Panc1 (cell line): ENCODE measurements at regions of chr14 and their contacts with region 1.

Region 1: GRCh38 chr14:54566410-54567223 is at the start of gene SAMD4A:
- DNase-seq: no peak
- ATAC-seq: peak; percentile 67
- H3K4me3 ChIP-seq: peak within 1 kb of the TSS; percentile 64 to 79
- H3K27ac ChIP-seq: peak within 1 kb of the TSS; percentile 84
- H3K4me1 ChIP-seq: peaks cover 22% of the 10 kb centered on the region
- H3K27me3 ChIP-seq: no peaks in the 10 kb centered on the region
- CTCF ChIP-seq: peak; percentile 52
- total RNA-seq, gene SAMD4A: 15.2 TPM

Region 2: DNA sequence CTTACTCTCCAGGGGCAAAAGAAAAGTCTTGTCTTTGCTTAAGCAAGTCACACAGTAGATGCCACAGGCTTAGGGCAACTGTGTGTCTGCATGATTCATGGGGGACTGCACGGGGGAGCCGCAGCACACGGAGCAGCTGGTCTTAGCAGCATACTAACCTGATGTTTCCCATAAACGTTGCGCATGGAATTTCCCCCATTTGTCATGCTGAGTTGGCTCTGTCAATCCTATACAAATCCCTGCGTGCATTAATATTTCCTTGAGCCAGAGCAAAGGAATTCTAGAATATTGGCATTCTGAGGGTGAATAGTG is 71.5 kb after region 1 on chr14:
- CTCF ChIA-PET with region 1: interaction called, 3 read pairs
- POLR2A ChIA-PET with region 1: interaction called, 6 read pairs
- in situ Hi-C with region 1: no loop called
- intact Hi-C with region 1: loop called (anchors 5 kb)
- DNase-seq: no peak
- ATAC-seq: peak; percentile 87
- H3K4me3 ChIP-seq: no peak overlapping the region
- H3K27ac ChIP-seq: 0 out of 2 replicates have a peak overlapping the region, but pooled peaks have one; percentile 17
- H3K4me1 ChIP-seq: peaks cover 12% of the 10 kb centered on the region
- H3K27me3 ChIP-seq: no peaks in the 10 kb centered on the region
- CTCF ChIP-seq: no peak

Region 3: DNA sequence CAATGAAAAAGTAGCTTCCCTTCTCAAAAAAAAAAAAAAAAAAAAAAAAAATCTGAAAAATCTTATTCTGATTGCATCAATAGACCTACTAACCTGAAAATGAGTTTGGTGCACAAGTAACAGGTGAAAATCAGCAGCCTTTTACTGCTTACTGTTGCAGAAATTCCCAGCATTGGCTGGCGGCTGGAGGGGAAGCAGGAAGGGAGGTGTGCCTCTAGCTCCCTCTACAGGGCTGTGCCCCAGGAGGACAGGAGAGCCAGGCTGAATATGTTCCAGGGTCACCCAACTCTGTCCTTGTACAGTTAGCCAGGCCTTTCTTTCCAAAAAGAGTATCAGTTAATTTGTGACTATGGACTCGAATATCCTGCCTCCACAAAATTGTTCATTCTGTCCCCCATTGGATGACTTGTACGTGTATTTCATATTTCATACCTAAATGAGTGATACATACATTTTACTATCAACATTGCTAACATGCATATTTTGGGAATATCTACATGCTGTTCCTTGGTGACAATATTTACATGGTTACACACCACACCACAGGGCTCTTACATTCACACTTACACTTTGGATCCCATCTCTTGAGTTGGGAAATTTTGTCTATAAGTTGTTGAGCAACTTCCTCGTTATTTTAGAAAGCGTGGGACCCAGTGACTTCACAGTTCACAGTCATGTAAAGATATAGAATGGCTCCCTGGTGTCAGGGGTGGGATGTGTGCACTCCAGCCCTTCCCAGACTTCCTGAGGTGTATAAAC is 125.1 kb after region 1 on chr14:
- CTCF ChIA-PET with region 1: no interaction called
- POLR2A ChIA-PET with region 1: interaction called, 8 read pairs
- in situ Hi-C with region 1: no loop called
- intact Hi-C with region 1: loop called (anchors 2 kb)
- DNase-seq: peak; percentile 59
- ATAC-seq: peak; percentile 93
- H3K4me3 ChIP-seq: no peak overlapping the region
- H3K27ac ChIP-seq: no peak overlapping the region
- H3K4me1 ChIP-seq: no peaks in the 10 kb centered on the region
- H3K27me3 ChIP-seq: no peaks in the 10 kb centered on the region
- CTCF ChIP-seq: peak; percentile 87

Region 4: GRCh38 chr14:54805521-54806322 is 239.1 kb after region 1 on chr14:
- CTCF ChIA-PET with region 1: interaction called, 8 read pairs
- POLR2A ChIA-PET with region 1: no interaction called
- in situ Hi-C with region 1: no loop called
- intact Hi-C with region 1: loop called (anchors 10 kb)
- DNase-seq: peak; percentile 68
- ATAC-seq: peak; percentile 95
- H3K4me3 ChIP-seq: peak overlapping the region in 1 of 2 experiments; percentile 17; a peak in 1 of 4 replicates
- H3K27ac ChIP-seq: no peak overlapping the region
- H3K4me1 ChIP-seq: no peaks in the 10 kb centered on the region
- H3K27me3 ChIP-seq: no peaks in the 10 kb centered on the region
- CTCF ChIP-seq: peak; percentile 94

Region 5: DNA sequence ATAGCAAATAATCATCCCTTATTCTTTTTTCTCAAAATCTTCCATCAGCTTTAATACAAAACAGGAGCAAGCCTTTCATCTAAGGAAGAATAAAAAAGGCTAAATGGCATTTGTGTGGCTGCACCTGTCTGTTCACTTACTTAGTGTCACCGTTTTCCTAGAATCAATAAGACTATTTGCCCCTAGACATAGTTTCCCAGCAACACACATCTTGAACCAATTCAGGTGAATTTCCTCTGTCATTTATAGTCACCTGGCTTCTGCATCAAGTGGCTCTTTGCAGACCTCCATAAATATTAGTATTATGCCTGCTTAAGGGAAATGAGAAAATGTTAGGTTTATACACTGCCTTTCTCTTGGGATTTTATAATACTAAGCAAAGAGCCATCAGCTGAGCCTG is 353.4 kb after region 1 on chr14:
- CTCF ChIA-PET with region 1: no interaction called
- POLR2A ChIA-PET with region 1: interaction called, 11 read pairs
- in situ Hi-C with region 1: no loop called
- intact Hi-C with region 1: no loop called
- DNase-seq: no peak
- ATAC-seq: no peak
- H3K4me3 ChIP-seq: no peak overlapping the region
- H3K27ac ChIP-seq: no peak overlapping the region
- H3K4me1 ChIP-seq: no peaks in the 10 kb centered on the region
- H3K27me3 ChIP-seq: no peaks in the 10 kb centered on the region
- CTCF ChIP-seq: no peak